Activated T-helper 1 cell treated with anti-CD3 and anti-CD28 coated beads, Interleukin-12 subunit alpha, Interleukin-12 subunit beta, Interleukin-2, Interleukin-4 antibody, amounts not matched to agents 30 ng/mL and 10 ng/mL and 1 ng/mL, durations not matched to agents 14 hours and 24 hours and 36 hours (primary cell): ENCODE measurements at regions of chr7 and their contacts with region 1.

Region 1: DNA sequence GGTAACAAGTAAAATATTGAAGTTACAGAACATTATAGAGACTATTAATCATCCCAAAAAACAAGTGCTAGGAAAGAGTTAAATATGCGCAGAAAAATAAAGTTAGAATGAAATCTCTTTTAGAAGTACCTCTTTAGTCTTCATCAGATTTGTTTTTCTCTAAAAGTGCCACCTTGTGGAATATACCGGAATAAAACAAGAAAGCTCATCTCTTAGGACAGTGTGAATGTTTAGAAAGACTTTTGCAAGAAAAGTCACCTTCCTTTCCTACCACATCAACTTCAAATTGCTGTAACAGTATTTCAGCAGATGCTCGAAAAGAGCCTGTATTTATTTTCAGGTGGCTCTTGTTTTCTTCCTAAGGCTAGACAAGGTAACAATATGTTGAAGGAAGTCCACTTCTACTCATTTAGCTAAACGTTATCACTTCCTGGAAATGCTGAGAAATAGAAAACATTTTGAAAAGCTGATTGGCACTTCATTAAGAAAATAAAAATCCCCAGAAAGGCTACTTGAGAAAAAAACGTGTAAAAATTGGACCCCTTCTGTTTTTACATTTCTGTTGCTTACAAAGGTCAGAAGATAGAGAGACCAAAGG is 19.8 kb upstream of the FAM133B start:
- DNase-seq: no peak
- H3K4me3 Mint-ChIP-seq: no peak overlapping the region
- H3K27ac Mint-ChIP-seq: peak overlapping the region; percentile 36
- H3K4me1 Mint-ChIP-seq: peaks cover 46% of the 10 kb centered on the region
- H3K27me3 Mint-ChIP-seq: no peaks in the 10 kb centered on the region

Region 2: DNA sequence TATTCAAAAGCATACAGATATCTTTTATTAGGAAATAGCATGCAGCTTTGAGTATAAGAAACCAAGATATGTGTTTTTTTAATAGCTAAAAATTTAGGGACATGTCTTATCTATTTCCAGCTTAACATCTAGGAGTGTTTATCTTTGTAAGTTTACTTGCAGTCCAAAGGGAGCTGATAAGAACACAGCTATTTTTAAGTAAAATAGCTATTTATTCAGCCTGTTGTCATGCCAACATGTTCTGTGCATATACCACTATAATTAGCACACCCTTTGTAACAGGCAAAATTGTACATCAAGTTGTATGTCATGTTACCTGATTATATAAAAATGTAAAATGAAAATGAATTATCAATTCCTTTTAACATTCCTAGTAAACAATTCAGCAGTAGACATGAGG is 49.4 kb before region 1 on chr7:
- intact Hi-C with region 1: loop called (anchors 2 kb)
- DNase-seq: no peak
- H3K4me3 Mint-ChIP-seq: no peak overlapping the region
- H3K27ac Mint-ChIP-seq: no peak overlapping the region
- H3K4me1 Mint-ChIP-seq: no peaks in the 10 kb centered on the region
- H3K27me3 Mint-ChIP-seq: no peaks in the 10 kb centered on the region